Activated CD8-positive, alpha-beta T cell treated with anti-CD3 and anti-CD28 coated beads, Interleukin-2, amount 10 ng/mL, durations not matched to agents 7 days and 5 days (primary cell): ENCODE measurements at regions of chr16 and their contacts with region 1.

Region 1: DNA sequence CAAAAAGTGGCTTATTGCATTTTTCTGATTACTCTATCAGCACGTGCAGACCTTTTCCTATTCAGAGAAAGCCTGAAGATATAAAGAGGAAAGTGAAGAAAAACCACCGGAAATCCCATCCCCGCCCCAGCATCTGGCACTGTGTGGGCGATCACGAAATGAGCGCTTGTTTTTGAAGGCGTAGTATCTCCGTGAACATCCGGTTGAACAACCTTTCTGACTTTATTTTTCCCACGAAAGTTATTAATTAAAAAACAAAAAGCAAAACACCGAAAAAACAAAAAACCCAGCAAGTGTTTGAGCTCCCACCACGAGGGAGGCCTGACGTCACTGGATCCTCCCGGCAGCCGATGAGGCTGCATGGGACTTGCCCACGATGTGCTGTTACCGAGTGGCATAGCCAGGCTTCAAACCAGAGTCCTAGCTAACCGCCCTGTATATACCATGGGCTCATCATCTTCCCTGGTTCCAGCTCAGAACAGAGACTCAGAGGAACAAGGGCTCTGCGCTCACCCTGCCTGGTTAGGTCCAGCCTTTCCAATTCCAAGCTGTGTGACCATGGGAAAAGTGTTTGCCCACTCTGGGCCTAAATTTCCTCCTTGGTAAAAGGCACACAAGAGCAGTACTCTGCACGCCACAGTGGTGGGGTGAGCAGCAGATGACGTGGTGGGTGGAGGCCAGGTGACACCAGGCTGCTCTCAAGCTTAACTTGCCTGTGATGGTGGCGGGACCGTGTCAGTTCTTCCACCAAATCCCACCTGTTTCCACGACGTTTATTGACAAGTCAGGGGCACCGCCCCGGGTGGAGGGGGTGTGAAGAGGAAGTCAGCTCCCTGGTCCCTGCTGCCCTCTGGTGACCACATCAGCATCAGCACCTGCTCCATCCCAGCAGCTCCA is 34.3 kb upstream of the IL21R start:
- DNase-seq: peak; percentile 93
- ATAC-seq: peak; percentile 82
- H3K4me3 Mint-ChIP-seq: peak overlapping the region; percentile 66
- H3K27ac Mint-ChIP-seq: peak overlapping the region; percentile 99
- H3K4me1 Mint-ChIP-seq: peaks cover 77% of the 10 kb centered on the region
- H3K27me3 Mint-ChIP-seq: no peaks in the 10 kb centered on the region

Region 2: GRCh38 chr16:27169511-27170071 is 198.1 kb before region 1 on chr16:
- CTCF ChIA-PET with region 1: interaction called, 96 read pairs
- POLR2A ChIA-PET with region 1: interaction called, 10 read pairs
- DNase-seq: peak; percentile 84
- ATAC-seq: peak; percentile 86
- H3K4me3 Mint-ChIP-seq: peak overlapping the region; percentile 15
- H3K27ac Mint-ChIP-seq: peak overlapping the region; percentile 72
- H3K4me1 Mint-ChIP-seq: peaks cover 58% of the 10 kb centered on the region
- H3K27me3 Mint-ChIP-seq: peaks cover 4% of the 10 kb centered on the region

Region 3: GRCh38 chr16:27313422-27314160 is 54.1 kb before region 1 on chr16 and contains the start of gene IL4R:
- CTCF ChIA-PET with region 1: interaction called, 48 read pairs
- POLR2A ChIA-PET with region 1: interaction called, 42 read pairs
- DNase-seq: peak; percentile 66
- ATAC-seq: peak; percentile 49
- H3K4me3 Mint-ChIP-seq: peak within 1 kb of the TSS; percentile 90
- H3K27ac Mint-ChIP-seq: peak within 1 kb of the TSS; percentile 93
- H3K4me1 Mint-ChIP-seq: peaks cover 48% of the 10 kb centered on the region
- H3K27me3 Mint-ChIP-seq: peaks cover 2% of the 10 kb centered on the region
- total RNA-seq, gene IL4R: 231 to 237 TPM

Region 4: GRCh38 chr16:27401768-27402568 is 34.3 kb after region 1 on chr16 and contains the start of gene IL21R:
- CTCF ChIA-PET with region 1: interaction called, 84 read pairs
- POLR2A ChIA-PET with region 1: interaction called, 100 read pairs
- DNase-seq: peak; percentile 90
- ATAC-seq: peak; percentile 81
- H3K4me3 Mint-ChIP-seq: peak within 1 kb of the TSS; percentile 97
- H3K27ac Mint-ChIP-seq: peak within 1 kb of the TSS; percentile 94
- H3K4me1 Mint-ChIP-seq: peaks cover 68% of the 10 kb centered on the region
- H3K27me3 Mint-ChIP-seq: no peaks in the 10 kb centered on the region
- total RNA-seq, gene IL21R: 23.5 to 24.2 TPM

Region 5: DNA sequence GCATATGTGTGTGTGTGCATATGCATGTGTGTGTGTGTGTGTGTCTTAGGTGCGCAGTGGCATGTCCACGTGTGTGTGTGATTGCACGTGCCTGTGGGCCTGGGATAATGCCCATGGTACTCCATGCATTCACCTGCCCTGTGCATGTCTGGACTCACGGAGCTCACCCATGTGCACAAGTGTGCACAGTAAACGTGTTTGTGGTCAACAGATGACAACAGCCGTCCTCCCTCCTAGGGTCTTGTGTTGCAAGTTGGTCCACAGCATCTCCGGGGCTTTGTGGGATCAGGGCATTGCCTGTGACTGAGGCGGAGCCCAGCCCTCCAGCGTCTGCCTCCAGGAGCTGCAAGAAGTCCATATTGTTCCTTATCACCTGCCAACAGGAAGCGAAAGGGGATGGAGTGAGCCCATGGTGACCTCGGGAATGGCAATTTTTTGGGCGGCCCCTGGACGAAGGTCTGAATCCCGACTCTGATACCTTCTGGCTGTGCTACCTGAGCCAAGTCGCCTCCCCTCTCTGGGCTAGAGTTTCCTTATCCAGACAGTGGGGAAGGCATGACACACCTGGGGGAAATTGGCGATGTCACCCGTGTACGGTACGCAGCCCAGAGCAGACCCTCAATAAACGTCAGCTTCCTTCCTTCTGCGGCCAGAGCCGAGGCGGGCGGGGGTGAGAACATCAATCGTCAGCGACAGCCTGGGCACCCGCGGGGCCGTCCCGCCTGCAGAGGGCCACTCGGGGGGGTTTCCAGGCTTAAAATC is 81.9 kb after region 1 on chr16:
- CTCF ChIA-PET with region 1: interaction called, 15 read pairs
- POLR2A ChIA-PET with region 1: interaction called, 9 read pairs
- DNase-seq: peak; percentile 88
- ATAC-seq: peak; percentile 71
- H3K4me3 Mint-ChIP-seq: peak overlapping the region; percentile 72
- H3K27ac Mint-ChIP-seq: peak overlapping the region; percentile 95
- H3K4me1 Mint-ChIP-seq: peaks cover 71% of the 10 kb centered on the region
- H3K27me3 Mint-ChIP-seq: no peaks in the 10 kb centered on the region